ENCODE measurements at regions of chr6 and their contacts with region 1.

Region 1: GRCh38 chr6:78268591-78269452 is 598.5 kb upstream of the IRAK1BP1 start:
- DNase-seq: no peak
- H3K4me3 ChIP-seq: no peak overlapping the region
- H3K27ac ChIP-seq: no peak overlapping the region
- H3K4me1 ChIP-seq: no peaks in the 10 kb centered on the region
- H3K27me3 ChIP-seq: no peaks in the 10 kb centered on the region
- CTCF ChIP-seq: no peak

Region 2: GRCh38 chr6:77816766-77817270 is 452.0 kb before region 1 on chr6:
- CTCF ChIA-PET with region 1: no interaction called
- POLR2A ChIA-PET with region 1: interaction called, 15 read pairs
- intact Hi-C with region 1: no loop called
- DNase-seq: no peak
- H3K4me3 ChIP-seq: no peak overlapping the region
- H3K27ac ChIP-seq: no peak overlapping the region
- H3K4me1 ChIP-seq: no peaks in the 10 kb centered on the region
- H3K27me3 ChIP-seq: no peaks in the 10 kb centered on the region
- CTCF ChIP-seq: no peak

Region 3: DNA sequence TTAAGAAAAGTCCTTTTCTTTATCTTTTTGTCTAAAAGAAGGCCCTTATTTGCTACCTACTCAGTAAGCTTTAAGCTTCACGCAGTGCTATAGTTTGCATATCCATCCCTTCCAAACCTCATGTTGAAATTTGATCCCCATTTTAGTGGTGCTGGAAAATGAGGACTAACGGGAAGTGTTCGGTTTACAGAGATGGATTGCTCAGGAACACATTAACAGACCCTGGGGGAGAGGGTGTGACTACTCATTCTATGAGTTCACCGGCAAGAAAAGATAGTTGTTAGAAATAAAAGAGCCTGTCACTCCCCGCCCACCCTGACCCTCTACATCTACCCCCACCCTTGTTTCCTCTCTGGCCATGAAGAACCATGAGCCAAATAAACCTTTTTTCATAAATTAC is 69.8 kb before region 1 on chr6:
- CTCF ChIA-PET with region 1: no interaction called
- POLR2A ChIA-PET with region 1: no interaction called
- intact Hi-C with region 1: no loop called
- DNase-seq: no peak
- H3K4me3 ChIP-seq: no peak overlapping the region
- H3K27ac ChIP-seq: no peak overlapping the region
- H3K4me1 ChIP-seq: no peaks in the 10 kb centered on the region
- H3K27me3 ChIP-seq: no peaks in the 10 kb centered on the region
- CTCF ChIP-seq: no peak

Region 4: DNA sequence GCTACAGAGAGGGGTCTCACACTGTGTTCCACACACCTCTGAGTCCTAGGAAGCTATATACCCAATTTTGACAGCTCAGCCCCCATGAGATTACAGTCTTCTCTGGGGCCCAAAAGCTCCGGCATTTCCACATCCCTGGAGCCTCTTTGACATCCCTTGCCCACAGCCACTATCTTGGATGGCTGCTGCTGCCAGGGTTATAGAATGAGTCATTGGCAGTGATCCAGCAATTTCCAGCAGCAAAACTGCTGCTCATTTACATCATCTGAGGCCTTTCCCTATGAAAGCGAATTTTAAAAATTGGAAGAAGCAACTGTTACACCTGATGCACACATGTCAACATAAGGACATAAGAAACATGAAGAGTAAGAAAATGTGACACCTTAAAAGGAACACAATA is 25.3 kb before region 1 on chr6:
- CTCF ChIA-PET with region 1: no interaction called
- POLR2A ChIA-PET with region 1: no interaction called
- intact Hi-C with region 1: no loop called
- DNase-seq: peak in 1 of 2 experiments; percentile 5
- H3K4me3 ChIP-seq: no peak overlapping the region
- H3K27ac ChIP-seq: no peak overlapping the region
- H3K4me1 ChIP-seq: no peaks in the 10 kb centered on the region
- H3K27me3 ChIP-seq: no peaks in the 10 kb centered on the region
- CTCF ChIP-seq: no peak

Measured in PC-9 (cell line).